Common myeloid progenitor, CD34-positive (primary cell): ENCODE measurements at regions of chr4 and their contacts with region 1.

Region 1: DNA sequence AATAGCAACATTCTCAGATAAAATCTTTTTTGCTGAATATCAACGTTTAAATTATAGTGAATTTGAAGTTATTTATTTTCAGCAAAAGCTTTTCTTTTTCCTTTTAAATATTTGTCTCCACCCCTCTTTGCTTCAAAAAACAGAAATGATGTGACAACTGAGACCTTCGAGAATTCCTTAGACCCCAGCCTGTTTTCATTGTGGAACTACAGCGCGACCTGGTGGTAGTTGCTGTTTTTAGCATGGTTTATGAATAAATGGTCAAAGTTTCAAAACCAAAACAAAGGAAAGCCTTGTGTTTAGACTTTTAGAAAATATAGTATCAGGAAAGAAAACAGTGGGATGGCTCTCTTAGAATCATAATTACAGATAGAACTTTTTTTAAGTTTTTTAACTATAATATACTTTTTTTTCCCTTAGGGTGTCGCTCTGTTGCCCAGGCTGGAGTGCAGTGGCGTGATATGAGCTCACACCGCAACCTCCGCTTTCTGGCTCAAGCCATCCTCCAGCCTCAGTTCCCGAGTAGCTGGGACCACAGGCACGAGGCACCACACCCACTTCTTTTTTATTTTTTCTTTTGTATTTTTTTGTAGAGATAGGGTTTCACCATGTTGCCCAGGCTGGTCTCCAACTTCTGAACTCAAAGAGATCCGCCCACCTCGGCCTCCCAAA is 26.8 kb upstream of the TMEM184C start:
- DNase-seq: peak; percentile 40 to 67 (median 66)
- H3K4me3 ChIP-seq: no peak overlapping the region
- H3K27ac ChIP-seq: no peak overlapping the region
- H3K4me1 ChIP-seq: no peaks in the 10 kb centered on the region
- H3K27me3 ChIP-seq: peaks cover 0 to 2% (median 0%) of the 10 kb centered on the region in 5 experiments

Region 2: GRCh38 chr4:147160908-147161513 is 429.4 kb before region 1 on chr4:
- CTCF ChIA-PET with region 1: interaction called, 12 read pairs
- POLR2A ChIA-PET with region 1: no interaction called
- DNase-seq: peak; percentile 15 to 59 (median 52)
- H3K4me3 ChIP-seq: no peak overlapping the region
- H3K27ac ChIP-seq: no peak overlapping the region
- H3K4me1 ChIP-seq: peaks cover 0 to 5% (median 3%) of the 10 kb centered on the region in 4 experiments
- H3K27me3 ChIP-seq: peaks cover 4 to 61% (median 13%) of the 10 kb centered on the region in 5 experiments

Region 3: DNA sequence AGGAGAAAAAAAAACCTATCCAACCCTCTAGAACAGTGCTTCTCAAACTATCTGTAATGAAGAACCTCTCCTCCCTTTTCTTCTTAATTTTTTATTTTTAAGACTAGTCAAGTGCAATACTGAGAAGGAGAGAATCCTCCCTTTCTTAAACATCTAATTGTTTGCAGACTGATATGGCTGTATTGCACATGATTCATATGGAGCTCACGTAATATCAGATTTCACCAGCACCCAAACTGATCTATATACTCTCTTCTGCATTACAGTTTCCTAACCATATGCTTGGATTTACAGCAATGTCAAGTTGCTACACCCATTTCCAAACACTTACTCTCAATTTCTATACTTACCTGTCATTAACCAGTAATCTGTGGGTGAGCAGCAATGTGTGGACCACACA is 84.1 kb after region 1 on chr4:
- CTCF ChIA-PET with region 1: no interaction called
- POLR2A ChIA-PET with region 1: no interaction called
- DNase-seq: no peak
- H3K4me3 ChIP-seq: no peak overlapping the region
- H3K27ac ChIP-seq: no peak overlapping the region
- H3K4me1 ChIP-seq: no peaks in the 10 kb centered on the region
- H3K27me3 ChIP-seq: no peaks in the 10 kb centered on the region